CD4-positive, alpha-beta T cell (primary cell): ENCODE measurements at regions of chr19 and their contacts with region 1.

Region 1: GRCh38 chr19:49555600-49556411 is 24.6 kb downstream of the NOSIP start:
- DNase-seq: peak; percentile 65 to 94 (median 84)
- ATAC-seq: peak; percentile 64
- H3K4me3 ChIP-seq: peak overlapping the region; percentile 68
- H3K4me3 Mint-ChIP-seq: peak overlapping the region; percentile 62
- H3K27ac ChIP-seq: peak overlapping the region; percentile 61 to 62
- H3K27ac Mint-ChIP-seq: peak overlapping the region; percentile 96
- H3K4me1 ChIP-seq: peaks cover 96% of the 10 kb centered on the region
- H3K4me1 Mint-ChIP-seq: peaks cover 74% of the 10 kb centered on the region
- H3K27me3 ChIP-seq: peaks cover 0 to 3% of the 10 kb centered on the region in 2 experiments
- H3K27me3 Mint-ChIP-seq: no peaks in the 10 kb centered on the region
- CTCF ChIP-seq: no peak

Region 2: GRCh38 chr19:49533551-49534488 is 22.0 kb before region 1 on chr19:
- CTCF ChIA-PET with region 1: interaction called, 5 read pairs
- POLR2A ChIA-PET with region 1: interaction called, 19 read pairs
- intact Hi-C with region 1: no loop called
- DNase-seq: peak; percentile 72 to 92 (median 82)
- ATAC-seq: peak; percentile 91
- H3K4me3 ChIP-seq: peak overlapping the region; percentile 70
- H3K4me3 Mint-ChIP-seq: peak overlapping the region; percentile 93
- H3K27ac ChIP-seq: no peak overlapping the region
- H3K27ac Mint-ChIP-seq: peak overlapping the region; percentile 71
- H3K4me1 ChIP-seq: peaks cover 28% of the 10 kb centered on the region
- H3K4me1 Mint-ChIP-seq: peaks cover 27% of the 10 kb centered on the region
- H3K27me3 ChIP-seq: no peaks in the 10 kb centered on the region
- H3K27me3 Mint-ChIP-seq: no peaks in the 10 kb centered on the region
- CTCF ChIP-seq: peak; percentile 38